ENCODE measurements at regions of chr9 and their contacts with region 1.

Region 1: GRCh38 chr9:69056191-69056815 is 20.8 kb downstream of the FXN start:
- DNase-seq: no peak
- ATAC-seq: no peak
- H3K4me3 ChIP-seq: no peak overlapping the region
- H3K27ac ChIP-seq: no peak overlapping the region
- H3K4me1 ChIP-seq: no peaks in the 10 kb centered on the region
- H3K27me3 ChIP-seq: no peaks in the 10 kb centered on the region
- CTCF ChIP-seq: no peak

Region 2: DNA sequence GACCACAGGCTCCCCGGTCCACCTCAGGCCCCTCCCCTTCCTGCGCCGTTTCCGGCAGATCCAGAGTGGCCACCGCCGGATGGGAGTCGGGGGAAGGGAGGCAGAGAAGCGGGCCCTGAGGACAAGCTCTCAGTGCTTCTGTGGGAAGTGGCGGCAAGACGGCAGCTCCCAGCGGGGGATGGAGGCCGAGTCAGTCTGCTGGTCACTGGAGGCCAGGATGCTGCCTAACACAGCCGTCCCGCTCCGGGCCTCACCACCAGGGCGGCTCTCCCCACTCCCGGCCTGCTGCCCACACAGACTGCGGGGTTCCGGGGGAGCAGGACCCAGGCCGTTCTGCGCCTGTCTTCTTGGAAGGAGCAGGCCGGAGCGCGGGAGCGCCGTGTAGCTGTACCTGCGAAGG is 10.7 kb after region 1 on chr9:
- CTCF ChIA-PET with region 1: no interaction called
- POLR2A ChIA-PET with region 1: no interaction called
- in situ Hi-C with region 1: no loop called
- intact Hi-C with region 1: no loop called
- DNase-seq: no peak
- ATAC-seq: no peak
- H3K4me3 ChIP-seq: no peak overlapping the region
- H3K27ac ChIP-seq: no peak overlapping the region
- H3K4me1 ChIP-seq: no peaks in the 10 kb centered on the region
- H3K27me3 ChIP-seq: no peaks in the 10 kb centered on the region
- CTCF ChIP-seq: no peak

Region 3: DNA sequence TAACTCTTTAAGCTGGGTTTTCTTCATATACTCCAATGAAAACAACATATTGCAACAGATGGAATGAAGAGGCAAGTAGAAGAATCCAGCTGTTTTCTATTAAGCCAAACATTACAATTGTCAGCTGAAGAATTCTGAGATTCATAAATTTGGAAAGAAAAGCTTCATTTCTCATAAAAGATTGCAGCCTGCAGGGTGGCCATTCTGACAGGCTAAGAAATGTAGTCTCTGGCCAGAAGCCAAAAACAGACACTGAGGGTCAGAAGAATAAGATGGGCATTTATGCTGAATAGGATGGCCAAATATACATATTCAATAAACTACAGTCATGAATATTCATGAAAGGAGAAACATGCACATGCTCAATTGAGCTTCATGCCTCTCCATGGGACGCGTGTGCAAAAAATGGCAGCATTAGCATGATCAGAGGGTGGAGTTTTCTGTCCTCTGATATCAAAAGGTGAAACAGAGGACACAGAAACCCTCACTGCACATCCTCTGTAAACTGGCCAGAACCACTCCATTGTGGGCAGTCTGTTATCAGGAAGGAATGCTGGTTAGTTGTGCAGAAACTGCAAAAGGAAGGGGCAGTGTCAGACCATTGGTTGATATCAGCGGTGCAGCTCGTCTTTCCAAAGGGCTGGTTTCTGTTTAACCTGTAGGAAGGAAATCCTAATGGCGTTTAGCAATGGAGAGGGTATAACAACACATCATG is 29.4 kb after region 1 on chr9:
- CTCF ChIA-PET with region 1: no interaction called
- POLR2A ChIA-PET with region 1: no interaction called
- in situ Hi-C with region 1: no loop called
- intact Hi-C with region 1: loop called (anchors 5 kb)
- DNase-seq: no peak
- ATAC-seq: no peak
- H3K4me3 ChIP-seq: no peak overlapping the region
- H3K27ac ChIP-seq: no peak overlapping the region
- H3K4me1 ChIP-seq: no peaks in the 10 kb centered on the region
- H3K27me3 ChIP-seq: no peaks in the 10 kb centered on the region
- CTCF ChIP-seq: no peak

Region 4: GRCh38 chr9:69174616-69175463 is 118.5 kb after region 1 on chr9:
- CTCF ChIA-PET with region 1: no interaction called
- POLR2A ChIA-PET with region 1: no interaction called
- in situ Hi-C with region 1: no loop called
- intact Hi-C with region 1: loop called (anchors 10 kb)
- DNase-seq: no peak
- ATAC-seq: peak; percentile 52
- H3K4me3 ChIP-seq: peak overlapping the region; percentile 78 to 81
- H3K27ac ChIP-seq: peak overlapping the region; percentile 76
- H3K4me1 ChIP-seq: peaks cover 48% of the 10 kb centered on the region
- H3K27me3 ChIP-seq: no peaks in the 10 kb centered on the region
- CTCF ChIP-seq: no peak

Region 5: GRCh38 chr9:69193685-69194032 is 137.4 kb after region 1 on chr9:
- CTCF ChIA-PET with region 1: interaction called, 6 read pairs
- POLR2A ChIA-PET with region 1: no interaction called
- in situ Hi-C with region 1: no loop called
- intact Hi-C with region 1: loop called (anchors 1 kb)
- DNase-seq: no peak
- ATAC-seq: no peak; the same call in 1 of the 2 replicates
- H3K4me3 ChIP-seq: no peak overlapping the region
- H3K27ac ChIP-seq: no peak overlapping the region
- H3K4me1 ChIP-seq: peaks cover 6% of the 10 kb centered on the region
- H3K27me3 ChIP-seq: no peaks in the 10 kb centered on the region
- CTCF ChIP-seq: 0 out of 2 replicates have a peak, but pooled peaks have one; percentile 0

Region 6: DNA sequence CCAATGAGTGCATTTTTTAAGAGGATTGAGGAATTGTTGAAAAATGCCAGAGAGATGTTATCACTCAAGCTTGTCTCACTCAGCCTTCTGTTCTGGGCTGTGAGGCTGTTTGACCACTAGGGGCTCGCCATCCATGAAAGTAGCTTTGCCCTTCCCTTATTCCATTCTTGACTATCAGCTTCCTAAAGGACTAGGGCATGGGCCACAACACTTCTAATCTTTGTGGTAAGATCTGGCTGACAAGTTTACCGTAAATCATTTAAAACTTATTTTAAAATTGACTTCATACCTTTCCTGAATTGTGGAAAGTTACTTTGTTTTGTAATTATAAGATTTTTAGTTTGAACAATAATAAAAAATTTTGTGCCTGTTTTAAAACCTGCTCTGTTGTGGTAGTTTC is 167.3 kb after region 1 on chr9:
- CTCF ChIA-PET with region 1: no interaction called
- POLR2A ChIA-PET with region 1: no interaction called
- in situ Hi-C with region 1: no loop called
- intact Hi-C with region 1: loop called (anchors 10 kb)
- DNase-seq: peak; percentile 8
- ATAC-seq: peak; percentile 94
- H3K4me3 ChIP-seq: no peak overlapping the region
- H3K27ac ChIP-seq: no peak overlapping the region
- H3K4me1 ChIP-seq: no peaks in the 10 kb centered on the region
- H3K27me3 ChIP-seq: no peaks in the 10 kb centered on the region
- CTCF ChIP-seq: peak; percentile 83